Left colon (tissue), 2 donors: ENCODE measurements at regions of chr1 and their contacts with region 1.

Region 1: GRCh38 chr1:152189657-152190442 is 30.8 kb upstream of the RPTN start:
- DNase-seq: peak in 1 of 2 donors; percentile 66
- ATAC-seq: peak; percentile 71

Region 2: GRCh38 chr1:152052606-152053005 is 137.2 kb before region 1 on chr1:
- intact Hi-C with region 1: loop called (anchors 5 to 10 kb)
- DNase-seq: peak; percentile 77 to 90
- ATAC-seq: peak; percentile 32

Region 3: DNA sequence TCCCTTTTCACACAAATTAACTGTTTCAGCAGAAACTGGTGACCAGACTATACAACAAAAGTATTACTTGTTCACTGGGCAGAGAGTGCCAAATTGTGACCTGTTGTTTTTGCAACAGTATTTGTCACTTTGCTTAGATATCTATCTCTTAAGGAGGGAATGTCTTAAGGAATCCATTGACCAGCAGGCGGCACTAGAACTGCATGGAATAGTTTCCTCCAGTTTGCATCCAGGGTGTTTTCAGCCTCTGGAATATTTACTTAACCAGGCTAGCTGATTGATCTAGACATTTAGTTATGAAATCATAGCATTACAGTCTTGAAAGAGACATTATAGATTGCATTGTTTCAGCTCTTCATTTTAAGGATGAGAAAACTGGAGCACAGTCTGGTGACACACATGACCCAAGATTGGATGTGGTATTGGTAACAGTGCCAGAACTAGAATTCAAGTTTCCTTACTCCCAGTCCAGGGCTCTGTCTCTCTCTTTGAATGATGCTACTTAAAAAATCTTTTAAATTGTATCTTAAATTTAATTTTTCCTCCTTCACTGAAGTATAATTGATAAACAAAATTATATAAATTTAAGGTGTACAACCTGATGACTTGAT is 47.8 kb before region 1 on chr1:
- intact Hi-C with region 1: loop called in 1 of 2 experiments (anchors 2 kb)
- DNase-seq: peak in 1 of 2 donors; percentile 72
- ATAC-seq: peak; percentile 62

Region 4: GRCh38 chr1:152459596-152460528 is 270.0 kb after region 1 on chr1:
- intact Hi-C with region 1: loop called (anchors 5 to 10 kb)
- DNase-seq: peak; percentile 55 to 77
- ATAC-seq: peak; percentile 77